Sciatic nerve (tissue), 2 donors: ENCODE measurements at regions of chr5 and their contacts with region 1.

Region 1: GRCh38 chr5:154811653-154812365 is 38.6 kb downstream of the FAXDC2 start:
- DNase-seq: peak; percentile 76
- ATAC-seq: peak; percentile 72

Region 2: GRCh38 chr5:154654486-154655371 is 157.1 kb before region 1 on chr5:
- intact Hi-C with region 1: loop called (anchors 5 kb)
- DNase-seq: no peak
- ATAC-seq: peak; percentile 14

Region 3: GRCh38 chr5:154868702-154869101 is 56.9 kb after region 1 on chr5:
- intact Hi-C with region 1: no loop called
- DNase-seq: no peak
- ATAC-seq: peak; percentile 60